Heart right ventricle (tissue), 16 donors: ENCODE measurements at regions of chr1 and their contacts with region 1.

Region 1: GRCh38 chr1:31745096-31745945 is 18.8 kb downstream of the ADGRB2 start:
- DNase-seq: peak; percentile 59 to 61
- ATAC-seq: peak; percentile 48 to 84 (median 74)
- H3K4me3 ChIP-seq: no peak overlapping the region
- H3K27ac ChIP-seq: no peak overlapping the region
- H3K4me1 ChIP-seq: peaks cover 0 to 37% (median 14%) of the 10 kb centered on the region in 9 donors
- H3K27me3 ChIP-seq: no peaks in the 10 kb centered on the region
- CTCF ChIP-seq: peak; percentile 24 to 81 (median 76)

Region 2: GRCh38 chr1:31663622-31664452 is 81.5 kb before region 1 on chr1:
- intact Hi-C with region 1: loop called in 3 of 10 experiments (anchors 10 kb)
- DNase-seq: peak; percentile 62 to 69
- ATAC-seq: peak in 7 of 8 donors; percentile 33 to 66 (median 52)
- H3K4me3 ChIP-seq: no peak overlapping the region
- H3K27ac ChIP-seq: no peak overlapping the region
- H3K4me1 ChIP-seq: peaks cover 6 to 26% (median 15%) of the 10 kb centered on the region in 9 donors
- H3K27me3 ChIP-seq: no peaks in the 10 kb centered on the region
- CTCF ChIP-seq: peak; percentile 83 to 92 (median 89)